Cardiac septum (tissue), 1 donor: ENCODE measurements at regions of chr3 and their contacts with region 1.

Region 1: GRCh38 chr3:37855363-37855970 is 6.2 kb upstream of the CTDSPL start:
- DNase-seq: peak; percentile 94

Region 2: GRCh38 chr3:37967260-37967881 is 111.9 kb after region 1 on chr3:
- intact Hi-C with region 1: loop called (anchors 1 kb)
- DNase-seq: no peak

Region 3: GRCh38 chr3:38004415-38005076 is 149.1 kb after region 1 on chr3:
- intact Hi-C with region 1: loop called (anchors 1 kb)
- DNase-seq: no peak